Activated T-helper 2 cell treated with anti-CD3 and anti-CD28 coated beads, Interferon-gamma antibody, Interleukin-2, Interleukin-4, amounts not matched to agents 10 μg/mL and 5 μg/mL and 100 μg/mL, durations not matched to agents 14 hours and 24 hours and 36 hours (primary cell): ENCODE measurements at regions of chr3 and their contacts with region 1.

Region 1: DNA sequence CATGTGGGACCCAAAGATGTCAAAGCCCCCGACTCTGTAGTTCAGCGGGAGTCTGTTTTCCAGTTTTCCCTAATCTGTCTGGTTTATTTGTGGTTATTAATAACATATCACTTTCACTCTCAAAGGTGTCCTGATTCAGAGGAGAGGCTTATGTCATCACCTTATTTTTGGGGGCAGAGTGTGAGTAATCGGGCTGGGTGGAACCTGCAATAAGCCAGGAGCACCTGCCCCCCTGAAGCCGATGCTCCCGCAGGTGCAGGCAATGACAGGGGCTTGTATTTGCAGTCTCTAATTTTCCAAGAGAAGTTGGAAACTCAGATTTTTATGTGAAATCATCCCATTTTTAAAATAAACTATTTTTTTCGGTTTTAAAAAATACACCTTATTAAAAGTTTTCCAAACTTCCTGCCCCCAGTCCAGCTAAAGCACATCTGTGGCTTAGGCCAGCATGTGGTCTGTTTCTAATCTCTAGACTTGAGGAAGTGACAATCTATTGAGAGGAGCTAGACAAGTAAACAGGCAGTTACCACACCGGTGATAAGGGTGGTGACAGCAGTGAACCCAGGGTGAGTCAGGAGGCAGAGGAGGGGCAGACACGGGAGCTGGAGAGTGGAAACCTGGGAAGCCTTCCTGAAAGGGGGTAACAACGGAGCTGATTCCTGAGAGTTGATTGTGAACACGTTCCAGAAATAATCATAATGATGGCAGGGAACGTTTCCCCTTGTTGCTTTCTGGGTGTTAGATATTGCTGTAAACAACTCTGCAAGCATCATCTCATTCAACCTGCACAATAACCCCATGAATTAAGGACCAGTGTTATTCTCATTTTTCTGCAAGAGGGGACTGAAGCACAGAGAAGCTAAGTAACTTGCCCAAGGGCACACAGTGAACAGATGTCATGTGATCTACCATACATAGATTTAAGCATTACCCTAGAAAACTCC is 37.3 kb downstream of the BHLHE40 start:
- DNase-seq: peak; percentile 47
- H3K4me3 Mint-ChIP-seq: peak overlapping the region; percentile 4
- H3K27ac Mint-ChIP-seq: peak overlapping the region; percentile 71
- H3K4me1 Mint-ChIP-seq: peaks cover 81% of the 10 kb centered on the region
- H3K27me3 Mint-ChIP-seq: no peaks in the 10 kb centered on the region

Region 2: DNA sequence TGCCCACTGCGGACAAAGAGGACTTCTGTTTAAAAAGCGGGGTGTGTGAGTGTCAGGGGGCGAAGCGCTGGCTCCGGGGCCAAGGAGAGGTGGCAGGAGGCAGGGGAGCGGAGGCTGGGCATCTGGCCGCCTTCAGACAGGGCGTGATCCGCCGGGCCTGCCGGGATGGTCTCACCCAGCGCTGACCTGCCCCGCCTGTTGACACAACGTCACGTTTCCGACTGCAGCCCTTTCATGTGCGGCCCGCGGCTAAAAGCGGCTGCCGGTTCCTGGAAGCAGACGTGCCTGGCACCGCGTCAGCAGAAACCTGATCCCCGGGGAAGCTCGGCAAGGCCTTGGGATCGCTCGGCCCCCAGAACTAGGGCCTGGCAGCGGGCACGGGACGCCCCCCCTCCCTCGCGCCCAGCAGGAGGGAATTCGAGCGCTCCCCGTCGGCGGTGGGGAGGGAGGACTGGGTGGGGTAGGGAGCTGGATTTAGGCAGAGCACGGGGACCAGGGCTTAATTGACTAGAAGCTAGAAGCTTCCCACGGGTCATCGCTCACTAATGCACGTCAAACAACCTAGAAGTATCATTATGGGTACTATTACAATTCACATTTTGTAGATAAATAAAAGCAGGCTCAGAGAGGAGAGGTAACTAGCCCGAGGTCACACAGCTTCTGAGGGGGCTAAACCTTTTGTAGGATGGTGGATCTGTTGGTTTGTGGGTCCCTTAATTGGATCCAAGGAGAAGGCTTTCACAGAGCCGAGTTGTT is 29.5 kb before region 1 on chr3:
- intact Hi-C with region 1: loop called (anchors 1 kb)
- DNase-seq: peak; percentile 75
- H3K4me3 Mint-ChIP-seq: peak overlapping the region; percentile 82
- H3K27ac Mint-ChIP-seq: peak overlapping the region; percentile 85
- H3K4me1 Mint-ChIP-seq: peaks cover 53% of the 10 kb centered on the region
- H3K27me3 Mint-ChIP-seq: no peaks in the 10 kb centered on the region